Endothelial cell of umbilical vein (primary cell): ENCODE measurements at regions of chr6 and their contacts with region 1.

Region 1: GRCh38 chr6:21846541-21847451 is 253.2 kb downstream of the SOX4 start:
- DNase-seq: peak; percentile 96
- H3K4me3 ChIP-seq: peak overlapping the region in 1 of 3 experiments; percentile 27
- H3K27ac ChIP-seq: peak overlapping the region; percentile 98
- H3K4me1 ChIP-seq: peaks cover 54% of the 10 kb centered on the region
- H3K27me3 ChIP-seq: no peaks in the 10 kb centered on the region
- CTCF ChIP-seq: no peak
- POLR2A ChIP-seq: peak; percentile 30

Region 2: GRCh38 chr6:20877008-20877937 is 969.5 kb before region 1 on chr6:
- CTCF ChIA-PET with region 1: no interaction called
- POLR2A ChIA-PET with region 1: no interaction called
- dilution Hi-C with region 1: no loop called
- intact Hi-C with region 1: loop called (anchors 5 kb)
- DNase-seq: peak; percentile 94
- H3K4me3 ChIP-seq: no peak overlapping the region
- H3K27ac ChIP-seq: peak overlapping the region; percentile 85
- H3K4me1 ChIP-seq: peaks cover 38% of the 10 kb centered on the region
- H3K27me3 ChIP-seq: no peaks in the 10 kb centered on the region
- CTCF ChIP-seq: no peak
- POLR2A ChIP-seq: peak; percentile 8

Region 3: GRCh38 chr6:21742238-21742660 is 104.5 kb before region 1 on chr6:
- CTCF ChIA-PET with region 1: interaction called, 3 read pairs
- POLR2A ChIA-PET with region 1: no interaction called
- dilution Hi-C with region 1: no loop called
- intact Hi-C with region 1: loop called (anchors 1 kb)
- DNase-seq: peak; percentile 89
- H3K4me3 ChIP-seq: peak overlapping the region in 1 of 3 experiments; percentile 53
- H3K27ac ChIP-seq: peak overlapping the region; percentile 95
- H3K4me1 ChIP-seq: peaks cover 37% of the 10 kb centered on the region
- H3K27me3 ChIP-seq: no peaks in the 10 kb centered on the region
- CTCF ChIP-seq: no peak
- POLR2A ChIP-seq: no peak

Region 4: DNA sequence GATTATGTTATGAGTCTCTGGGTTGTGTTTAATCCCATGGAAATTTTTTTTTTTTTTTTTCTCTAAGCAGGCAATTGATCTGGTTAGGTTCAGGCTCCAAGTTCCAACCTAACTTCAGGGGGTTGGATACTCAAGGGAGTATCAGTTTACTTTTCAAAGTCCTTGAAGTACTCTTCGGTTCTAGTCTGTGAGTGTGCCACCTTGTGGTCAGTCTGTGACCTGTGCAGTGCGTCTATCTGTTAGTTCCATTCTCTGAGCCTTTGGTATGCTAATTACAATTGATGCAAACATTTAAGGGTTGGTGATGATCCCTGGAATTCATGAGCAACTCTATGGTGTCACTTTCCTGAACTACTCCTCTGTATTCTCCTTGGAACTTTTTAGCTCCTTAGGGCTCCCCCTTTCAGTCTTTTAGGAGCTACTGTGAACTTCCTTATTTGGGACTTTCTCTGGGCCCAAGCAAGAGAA is 88.8 kb after region 1 on chr6:
- CTCF ChIA-PET with region 1: no interaction called
- POLR2A ChIA-PET with region 1: no interaction called
- dilution Hi-C with region 1: no loop called
- intact Hi-C with region 1: loop called (anchors 1 kb)
- DNase-seq: no peak
- H3K4me3 ChIP-seq: no peak overlapping the region
- H3K27ac ChIP-seq: no peak overlapping the region
- H3K4me1 ChIP-seq: peaks cover 19% of the 10 kb centered on the region
- H3K27me3 ChIP-seq: no peaks in the 10 kb centered on the region
- CTCF ChIP-seq: peak; percentile 42 to 45
- POLR2A ChIP-seq: no peak

Region 5: GRCh38 chr6:22448291-22448711 is 601.5 kb after region 1 on chr6:
- CTCF ChIA-PET with region 1: no interaction called
- POLR2A ChIA-PET with region 1: no interaction called
- dilution Hi-C with region 1: no loop called
- intact Hi-C with region 1: loop called (anchors 2 kb)
- DNase-seq: peak; percentile 98
- H3K4me3 ChIP-seq: no peak overlapping the region
- H3K27ac ChIP-seq: peak overlapping the region; percentile 85
- H3K4me1 ChIP-seq: peaks cover 49% of the 10 kb centered on the region
- H3K27me3 ChIP-seq: no peaks in the 10 kb centered on the region
- CTCF ChIP-seq: no peak
- POLR2A ChIP-seq: no peak

Region 6: GRCh38 chr6:22880686-22881433 is 1034.1 kb after region 1 on chr6:
- CTCF ChIA-PET with region 1: no interaction called
- POLR2A ChIA-PET with region 1: no interaction called
- dilution Hi-C with region 1: no loop called
- intact Hi-C with region 1: loop called (anchors 2 kb)
- DNase-seq: peak; percentile 92
- H3K4me3 ChIP-seq: no peak overlapping the region
- H3K27ac ChIP-seq: peak overlapping the region; percentile 80
- H3K4me1 ChIP-seq: peaks cover 53% of the 10 kb centered on the region
- H3K27me3 ChIP-seq: no peaks in the 10 kb centered on the region
- CTCF ChIP-seq: no peak
- POLR2A ChIP-seq: no peak